ENCODE measurements at regions of chrX and their contacts with region 1.

Region 1: DNA sequence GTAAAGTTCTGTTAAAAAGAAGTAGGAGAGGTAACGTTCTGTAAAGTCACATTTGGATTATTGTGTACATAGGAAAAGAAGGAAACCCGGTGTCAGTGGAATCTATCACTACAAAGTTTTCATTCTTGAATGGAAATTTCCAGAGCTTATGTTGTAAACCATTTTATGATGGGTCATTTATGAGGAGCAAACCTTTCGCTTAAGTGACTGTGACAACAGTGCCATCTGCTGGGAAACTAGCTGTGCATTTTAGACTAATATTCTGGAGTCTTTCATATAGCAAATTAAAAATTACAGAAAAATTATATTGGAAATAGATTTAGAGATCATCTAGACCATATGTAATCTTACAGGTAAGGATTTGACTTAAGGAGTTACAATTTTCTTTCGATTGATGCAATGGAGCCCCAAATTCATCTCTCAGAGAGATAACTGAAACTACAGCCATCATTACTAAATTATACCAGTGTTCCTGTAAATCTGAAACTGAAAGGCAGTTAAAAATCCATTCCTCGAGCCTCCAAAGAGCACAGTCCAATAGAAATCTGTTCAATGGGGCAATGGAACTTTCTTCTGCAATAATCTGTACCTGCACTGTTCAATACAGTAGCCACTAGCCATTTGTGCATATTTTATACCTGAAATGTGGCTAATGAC is 26.9 kb downstream of the ASB9 start:
- DNase-seq: peak in 13 of 14 experiments; percentile 3 to 69 (median 32)
- ATAC-seq: no peak
- H3K4me3 ChIP-seq: no peak overlapping the region
- H3K4me3 Mint-ChIP-seq: no peak overlapping the region
- H3K27ac ChIP-seq: no peak overlapping the region
- H3K27ac Mint-ChIP-seq: no peak overlapping the region
- H3K4me1 ChIP-seq: no peaks in the 10 kb centered on the region
- H3K4me1 Mint-ChIP-seq: no peaks in the 10 kb centered on the region
- H3K27me3 ChIP-seq: no peaks in the 10 kb centered on the region
- H3K27me3 Mint-ChIP-seq: no peaks in the 10 kb centered on the region
- CTCF ChIP-seq: peak; percentile 54

Region 2: DNA sequence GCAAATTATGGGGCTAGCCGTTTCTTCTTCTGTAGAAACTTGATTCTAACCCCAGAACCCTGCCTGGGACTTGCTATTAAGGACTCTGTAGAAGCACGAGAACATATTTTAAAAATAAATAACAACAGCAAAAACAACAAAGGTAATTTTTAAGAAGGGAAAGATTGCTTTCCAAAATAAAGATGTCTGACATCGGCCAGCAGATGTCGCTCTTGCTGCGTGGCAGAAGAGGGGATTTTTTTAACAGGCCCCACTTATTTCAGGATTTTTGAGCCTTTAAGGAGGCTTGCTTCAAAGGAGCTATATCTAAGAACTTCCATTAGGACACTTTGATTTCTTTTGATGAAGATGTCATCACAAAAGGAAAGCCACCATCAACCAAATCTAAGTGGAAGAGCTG is 1736.5 kb before region 1 on chrX:
- CTCF ChIA-PET with region 1: no interaction called
- POLR2A ChIA-PET with region 1: no interaction called
- intact Hi-C with region 1: loop called in 1 of 2 experiments (anchors 2 kb)
- DNase-seq: peak; percentile 12 to 73 (median 38)
- ATAC-seq: no peak
- H3K4me3 ChIP-seq: no peak overlapping the region
- H3K4me3 Mint-ChIP-seq: no peak overlapping the region
- H3K27ac ChIP-seq: no peak overlapping the region
- H3K27ac Mint-ChIP-seq: no peak overlapping the region
- H3K4me1 ChIP-seq: no peaks in the 10 kb centered on the region
- H3K4me1 Mint-ChIP-seq: no peaks in the 10 kb centered on the region
- H3K27me3 ChIP-seq: no peaks in the 10 kb centered on the region
- H3K27me3 Mint-ChIP-seq: no peaks in the 10 kb centered on the region
- CTCF ChIP-seq: peak; percentile 76

Region 3: GRCh38 chrX:14039344-14039743 is 1203.7 kb before region 1 on chrX:
- CTCF ChIA-PET with region 1: interaction called, 3 read pairs
- POLR2A ChIA-PET with region 1: no interaction called
- intact Hi-C with region 1: loop called (anchors 1 to 2 kb)
- DNase-seq: peak; percentile 23 to 79 (median 45)
- ATAC-seq: peak; percentile 86
- H3K4me3 ChIP-seq: no peak overlapping the region
- H3K4me3 Mint-ChIP-seq: no peak overlapping the region
- H3K27ac ChIP-seq: no peak overlapping the region
- H3K27ac Mint-ChIP-seq: no peak overlapping the region
- H3K4me1 ChIP-seq: no peaks in the 10 kb centered on the region
- H3K4me1 Mint-ChIP-seq: no peaks in the 10 kb centered on the region
- H3K27me3 ChIP-seq: no peaks in the 10 kb centered on the region
- H3K27me3 Mint-ChIP-seq: no peaks in the 10 kb centered on the region
- CTCF ChIP-seq: peak; percentile 62

Region 4: DNA sequence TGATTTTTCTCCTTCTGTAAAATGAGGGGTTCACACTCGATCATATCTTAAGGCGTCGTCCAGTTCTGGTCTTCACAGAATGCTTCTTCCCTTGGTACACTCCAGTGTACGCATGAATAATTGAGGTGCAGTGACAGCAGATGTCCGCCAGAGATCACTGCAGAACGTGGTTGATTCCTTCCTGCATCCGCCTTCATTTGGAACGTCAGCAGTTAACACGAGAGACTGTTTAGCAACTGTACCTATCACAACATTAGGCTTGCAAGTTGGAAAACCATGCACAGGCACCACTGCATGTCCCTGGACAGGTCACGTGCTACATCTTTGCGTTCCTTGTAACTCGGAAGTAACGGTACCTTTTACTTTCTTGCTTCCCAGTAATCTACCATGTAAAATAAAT is 1147.3 kb before region 1 on chrX:
- CTCF ChIA-PET with region 1: no interaction called
- POLR2A ChIA-PET with region 1: no interaction called
- intact Hi-C with region 1: loop called (anchors 1 to 2 kb)
- DNase-seq: peak; percentile 1 to 67 (median 14)
- ATAC-seq: peak; percentile 68
- H3K4me3 ChIP-seq: no peak overlapping the region
- H3K4me3 Mint-ChIP-seq: peak overlapping the region; percentile 15
- H3K27ac ChIP-seq: no peak overlapping the region
- H3K27ac Mint-ChIP-seq: no peak overlapping the region
- H3K4me1 ChIP-seq: peaks cover 3% of the 10 kb centered on the region
- H3K4me1 Mint-ChIP-seq: peaks cover 9% of the 10 kb centered on the region
- H3K27me3 ChIP-seq: peaks cover 0 to 4% of the 10 kb centered on the region in 2 experiments
- H3K27me3 Mint-ChIP-seq: no peaks in the 10 kb centered on the region
- CTCF ChIP-seq: peak; percentile 34

Region 5: GRCh38 chrX:14729058-14729457 is 514.0 kb before region 1 on chrX:
- CTCF ChIA-PET with region 1: no interaction called
- POLR2A ChIA-PET with region 1: no interaction called
- intact Hi-C with region 1: no loop called
- DNase-seq: no peak
- ATAC-seq: no peak
- H3K4me3 ChIP-seq: no peak overlapping the region
- H3K4me3 Mint-ChIP-seq: no peak overlapping the region
- H3K27ac ChIP-seq: no peak overlapping the region
- H3K27ac Mint-ChIP-seq: no peak overlapping the region
- H3K4me1 ChIP-seq: no peaks in the 10 kb centered on the region
- H3K4me1 Mint-ChIP-seq: no peaks in the 10 kb centered on the region
- H3K27me3 ChIP-seq: no peaks in the 10 kb centered on the region
- H3K27me3 Mint-ChIP-seq: no peaks in the 10 kb centered on the region
- CTCF ChIP-seq: no peak

Region 6: DNA sequence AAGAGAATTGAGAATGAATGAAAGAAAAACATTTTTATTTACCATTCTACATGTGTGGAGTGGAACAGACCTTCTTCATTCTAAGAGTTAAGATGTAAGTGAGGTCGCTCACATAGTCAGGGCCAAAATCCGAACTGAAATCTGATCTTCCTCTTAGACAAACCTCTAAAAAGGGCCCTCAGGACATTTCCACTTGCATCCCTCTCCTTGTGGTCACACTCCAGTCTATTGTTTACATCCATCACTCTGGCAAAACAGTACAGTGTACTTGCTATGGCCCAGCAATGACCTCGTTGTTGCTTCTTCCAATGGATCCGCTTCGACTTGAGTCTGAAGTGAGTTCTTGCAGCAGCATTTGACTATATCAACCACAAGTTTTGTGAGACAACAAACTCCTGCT is 315.6 kb before region 1 on chrX:
- CTCF ChIA-PET with region 1: no interaction called
- POLR2A ChIA-PET with region 1: no interaction called
- intact Hi-C with region 1: no loop called
- DNase-seq: no peak
- ATAC-seq: no peak
- H3K4me3 ChIP-seq: no peak overlapping the region
- H3K4me3 Mint-ChIP-seq: no peak overlapping the region
- H3K27ac ChIP-seq: no peak overlapping the region
- H3K27ac Mint-ChIP-seq: no peak overlapping the region
- H3K4me1 ChIP-seq: no peaks in the 10 kb centered on the region
- H3K4me1 Mint-ChIP-seq: no peaks in the 10 kb centered on the region
- H3K27me3 ChIP-seq: no peaks in the 10 kb centered on the region
- H3K27me3 Mint-ChIP-seq: peaks cover 3% of the 10 kb centered on the region
- CTCF ChIP-seq: no peak

Region 7: GRCh38 chrX:15107367-15107988 is 135.5 kb before region 1 on chrX:
- CTCF ChIA-PET with region 1: interaction called, 8 read pairs
- POLR2A ChIA-PET with region 1: no interaction called
- intact Hi-C with region 1: loop called in 1 of 2 experiments (anchors 5 kb)
- DNase-seq: peak in 6 of 14 experiments; percentile 0 to 28 (median 12)
- ATAC-seq: no peak
- H3K4me3 ChIP-seq: no peak overlapping the region
- H3K4me3 Mint-ChIP-seq: no peak overlapping the region
- H3K27ac ChIP-seq: no peak overlapping the region
- H3K27ac Mint-ChIP-seq: no peak overlapping the region
- H3K4me1 ChIP-seq: no peaks in the 10 kb centered on the region
- H3K4me1 Mint-ChIP-seq: no peaks in the 10 kb centered on the region
- H3K27me3 ChIP-seq: no peaks in the 10 kb centered on the region
- H3K27me3 Mint-ChIP-seq: no peaks in the 10 kb centered on the region
- CTCF ChIP-seq: no peak

Region 8: GRCh38 chrX:15143050-15143824 is 99.8 kb before region 1 on chrX:
- CTCF ChIA-PET with region 1: interaction called, 3 read pairs
- POLR2A ChIA-PET with region 1: no interaction called
- intact Hi-C with region 1: loop called in 1 of 2 experiments (anchors 5 kb)
- DNase-seq: peak; percentile 16 to 74 (median 49)
- ATAC-seq: peak; percentile 68
- H3K4me3 ChIP-seq: no peak overlapping the region
- H3K4me3 Mint-ChIP-seq: no peak overlapping the region
- H3K27ac ChIP-seq: no peak overlapping the region
- H3K27ac Mint-ChIP-seq: no peak overlapping the region
- H3K4me1 ChIP-seq: peaks cover 6% of the 10 kb centered on the region
- H3K4me1 Mint-ChIP-seq: peaks cover 17% of the 10 kb centered on the region
- H3K27me3 ChIP-seq: no peaks in the 10 kb centered on the region
- H3K27me3 Mint-ChIP-seq: no peaks in the 10 kb centered on the region
- CTCF ChIP-seq: peak; percentile 69

Measured in CD4-positive, alpha-beta T cell (primary cell).